Activated CD4-positive, alpha-beta T cell treated with anti-CD3 and anti-CD28 coated beads for 36 hours (primary cell): ENCODE measurements at regions of chr6 and their contacts with region 1.

Region 1: DNA sequence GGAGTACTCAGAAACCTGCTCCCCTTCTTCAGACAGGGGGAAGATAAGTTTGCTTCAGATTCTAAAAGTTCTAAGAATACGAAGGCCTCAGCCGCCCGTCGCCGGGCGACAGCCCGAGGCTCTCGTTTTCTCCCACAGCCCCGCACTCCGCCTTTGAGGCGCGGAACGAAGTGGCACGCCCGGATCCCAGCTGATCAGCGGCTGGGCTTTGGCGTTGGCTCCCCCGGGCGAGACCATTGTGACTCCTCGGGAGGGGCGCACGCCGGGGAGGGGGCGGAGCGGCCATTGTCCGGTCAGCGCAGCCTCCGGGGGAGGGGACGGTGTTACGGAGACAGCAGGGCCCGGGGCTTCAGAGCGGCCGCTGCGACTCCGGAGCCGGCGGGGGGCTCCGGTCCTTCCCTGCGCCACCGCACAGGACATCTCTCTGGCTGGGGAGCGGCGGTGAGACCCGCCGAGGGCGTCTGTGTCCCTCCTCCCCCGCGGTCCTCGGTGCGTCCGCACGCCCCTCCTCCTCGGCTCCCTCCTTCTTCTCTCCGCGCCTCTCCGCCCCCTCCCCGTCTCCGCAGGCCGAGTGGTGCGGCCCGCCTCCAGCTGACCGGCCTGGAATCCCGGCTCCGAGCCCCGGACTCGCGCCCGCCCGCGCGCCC is at the start of gene ZFAND3:
- DNase-seq: peak; percentile 97
- ATAC-seq: peak; percentile 80
- H3K4me3 Mint-ChIP-seq: peak within 1 kb of the TSS; percentile 98
- H3K27ac Mint-ChIP-seq: peak within 1 kb of the TSS; percentile 96
- H3K4me1 Mint-ChIP-seq: peaks cover 51% of the 10 kb centered on the region
- H3K27me3 Mint-ChIP-seq: no peaks in the 10 kb centered on the region
- total RNA-seq, gene ZFAND3: 34.5 to 47.8 TPM

Region 2: GRCh38 chr6:37257634-37258404 is 561.5 kb before region 1 on chr6 and contains the starts of genes TBC1D22B and TMEM217:
- CTCF ChIA-PET with region 1: no interaction called
- POLR2A ChIA-PET with region 1: no interaction called
- intact Hi-C with region 1: loop called in 1 of 2 experiments (anchors 2 kb)
- DNase-seq: peak; percentile 98
- ATAC-seq: peak; percentile 99
- H3K4me3 Mint-ChIP-seq: peak within 1 kb of the TSS; percentile 74
- H3K27ac Mint-ChIP-seq: peak within 1 kb of the TSS; percentile 94
- H3K4me1 Mint-ChIP-seq: peaks cover 45% of the 10 kb centered on the region
- H3K27me3 Mint-ChIP-seq: no peaks in the 10 kb centered on the region
- total RNA-seq, gene TBC1D22B: 14.9 to 17.0 TPM
- total RNA-seq, gene TMEM217: 2.5 TPM

Region 3: GRCh38 chr6:37516076-37516919 is 303.0 kb before region 1 on chr6:
- CTCF ChIA-PET with region 1: no interaction called
- POLR2A ChIA-PET with region 1: no interaction called
- intact Hi-C with region 1: loop called in 1 of 2 experiments (anchors 1 kb)
- DNase-seq: peak; percentile 95
- ATAC-seq: peak; percentile 78
- H3K4me3 Mint-ChIP-seq: peak overlapping the region; percentile 70
- H3K27ac Mint-ChIP-seq: peak overlapping the region; percentile 91
- H3K4me1 Mint-ChIP-seq: peaks cover 84% of the 10 kb centered on the region
- H3K27me3 Mint-ChIP-seq: no peaks in the 10 kb centered on the region

Region 4: GRCh38 chr6:37860226-37860839 is 41.0 kb after region 1 on chr6:
- CTCF ChIA-PET with region 1: interaction called, 4 read pairs
- POLR2A ChIA-PET with region 1: interaction called, 5 read pairs
- intact Hi-C with region 1: loop called (anchors 1 to 2 kb)
- DNase-seq: peak; percentile 24
- ATAC-seq: no peak
- H3K4me3 Mint-ChIP-seq: no peak overlapping the region
- H3K27ac Mint-ChIP-seq: no peak overlapping the region
- H3K4me1 Mint-ChIP-seq: peaks cover 77% of the 10 kb centered on the region
- H3K27me3 Mint-ChIP-seq: no peaks in the 10 kb centered on the region

Region 5: DNA sequence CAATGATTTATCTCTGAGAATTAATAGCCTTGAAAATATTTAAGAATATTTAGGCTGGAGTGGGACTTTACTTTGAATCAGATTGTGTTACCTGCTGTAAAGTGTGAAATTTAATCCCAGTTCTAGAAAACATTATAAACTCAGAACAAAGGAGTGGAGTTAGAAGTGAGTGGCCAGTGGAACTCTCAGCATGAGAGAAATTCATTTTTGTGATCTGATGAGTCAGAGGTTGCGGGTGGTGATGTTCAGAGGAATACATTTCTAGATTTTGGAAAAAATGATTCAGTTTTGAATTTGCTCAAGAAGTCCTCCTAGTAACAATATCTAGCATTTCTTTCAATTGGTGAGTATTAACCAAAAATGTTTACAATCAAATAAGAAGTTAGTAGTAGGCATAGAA is 167.7 kb after region 1 on chr6:
- CTCF ChIA-PET with region 1: no interaction called
- POLR2A ChIA-PET with region 1: no interaction called
- intact Hi-C with region 1: loop called in 1 of 2 experiments (anchors 1 kb)
- DNase-seq: peak; percentile 55
- ATAC-seq: peak; percentile 74
- H3K4me3 Mint-ChIP-seq: peak overlapping the region; percentile 7
- H3K27ac Mint-ChIP-seq: peak overlapping the region; percentile 29
- H3K4me1 Mint-ChIP-seq: peaks cover 71% of the 10 kb centered on the region
- H3K27me3 Mint-ChIP-seq: no peaks in the 10 kb centered on the region

Region 6: DNA sequence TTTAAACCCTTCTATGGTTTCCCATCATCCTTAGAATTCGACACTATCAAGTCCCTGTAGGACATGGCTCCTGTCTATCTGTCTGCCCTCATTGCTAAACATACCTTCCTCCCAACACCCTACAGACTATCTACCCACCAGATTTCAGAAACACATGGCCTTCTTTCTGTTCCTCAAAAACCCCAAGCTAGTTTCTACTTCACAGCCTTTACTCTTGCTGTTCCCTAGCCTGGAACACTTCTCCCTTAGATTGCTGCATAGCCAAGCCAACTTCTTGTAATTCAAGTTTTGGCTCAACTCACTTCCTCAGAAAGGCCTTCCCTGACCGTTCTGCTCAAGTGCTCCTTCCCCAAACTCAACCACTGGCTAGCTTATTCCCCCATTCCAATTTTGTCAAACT is 664.2 kb after region 1 on chr6:
- CTCF ChIA-PET with region 1: no interaction called
- POLR2A ChIA-PET with region 1: no interaction called
- intact Hi-C with region 1: no loop called
- DNase-seq: no peak
- ATAC-seq: no peak
- H3K4me3 Mint-ChIP-seq: no peak overlapping the region
- H3K27ac Mint-ChIP-seq: no peak overlapping the region
- H3K4me1 Mint-ChIP-seq: no peaks in the 10 kb centered on the region
- H3K27me3 Mint-ChIP-seq: no peaks in the 10 kb centered on the region

Region 7: DNA sequence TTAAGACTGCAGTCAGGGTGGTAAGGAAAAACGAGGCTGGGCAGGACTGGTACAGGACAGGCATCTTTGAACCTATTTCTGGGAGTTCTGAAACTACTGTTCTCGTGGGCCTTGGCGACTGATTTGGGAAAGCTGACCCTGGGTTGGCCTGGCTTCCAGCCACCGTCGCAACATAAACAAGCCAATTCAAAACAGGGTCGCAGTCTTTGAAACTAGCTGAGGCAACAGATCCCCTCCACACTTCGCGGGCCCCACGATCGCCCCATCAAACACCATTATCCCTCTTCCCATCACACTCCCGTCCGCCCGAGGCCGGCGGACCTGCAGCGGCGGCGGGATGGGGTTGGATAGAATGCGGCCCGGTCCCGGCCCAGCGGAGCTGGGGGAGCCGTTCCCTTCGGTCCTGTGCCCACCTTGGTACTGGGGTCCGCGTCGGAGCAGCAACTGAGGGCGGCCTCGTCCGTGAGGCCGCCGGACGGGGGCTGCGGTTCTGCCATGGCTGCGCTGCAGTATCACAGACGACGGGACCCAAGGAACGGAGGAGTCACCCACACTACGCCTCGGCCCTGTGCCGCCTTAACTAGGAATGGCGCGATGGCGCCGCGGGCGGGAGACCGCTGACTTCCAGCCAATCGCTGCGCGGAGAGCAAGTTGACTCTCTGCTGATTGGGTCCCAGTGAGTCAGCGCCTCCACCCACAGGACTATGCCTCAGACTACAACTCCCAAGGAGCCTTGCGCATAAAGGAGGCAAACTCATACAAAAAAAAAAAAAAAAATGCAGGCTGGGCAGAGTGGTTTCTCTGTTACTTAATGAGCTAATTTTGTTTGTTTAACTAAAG is 883.5 kb after region 1 on chr6 and contains the start of gene GLO1:
- CTCF ChIA-PET with region 1: no interaction called
- POLR2A ChIA-PET with region 1: interaction called, 3 read pairs
- intact Hi-C with region 1: loop called in 1 of 2 experiments (anchors 1 kb)
- DNase-seq: peak; percentile 98
- ATAC-seq: peak; percentile 100
- H3K4me3 Mint-ChIP-seq: peak within 1 kb of the TSS; percentile 96
- H3K27ac Mint-ChIP-seq: peak within 1 kb of the TSS; percentile 98
- H3K4me1 Mint-ChIP-seq: peaks cover 38% of the 10 kb centered on the region
- H3K27me3 Mint-ChIP-seq: peaks cover 3% of the 10 kb centered on the region
- total RNA-seq, gene GLO1: 150 to 152 TPM